ENCODE measurements at regions of chr2 and their contacts with region 1.

Region 1: GRCh38 chr2:186713691-186714090 is 19.8 kb downstream of the FAM171B start:
- DNase-seq: no peak
- ATAC-seq: no peak
- H3K4me3 ChIP-seq: no peak overlapping the region
- H3K27ac ChIP-seq: no peak overlapping the region
- H3K4me1 ChIP-seq: no peaks in the 10 kb centered on the region
- H3K27me3 ChIP-seq: no peaks in the 10 kb centered on the region
- CTCF ChIP-seq: no peak

Region 2: DNA sequence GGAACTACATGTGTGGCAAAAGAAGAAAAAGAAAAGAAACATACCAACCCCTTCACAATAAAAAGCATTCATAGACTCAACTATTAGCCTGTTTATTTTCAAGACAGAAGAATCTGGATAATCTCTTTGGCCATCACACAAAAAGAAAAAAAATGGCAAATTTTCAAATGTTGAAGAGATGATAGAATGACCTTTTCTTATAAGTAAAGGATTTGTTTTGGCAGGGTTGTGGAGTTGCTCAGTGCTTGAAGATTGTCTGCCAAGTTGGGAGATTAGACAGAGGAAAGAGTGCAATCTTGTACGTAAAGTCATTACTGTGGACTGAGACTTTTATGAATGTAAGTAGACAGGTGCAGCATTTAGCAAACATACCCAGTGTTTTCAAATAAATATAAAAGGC is 38.3 kb before region 1 on chr2:
- intact Hi-C with region 1: no loop called
- DNase-seq: no peak
- ATAC-seq: no peak
- H3K4me3 ChIP-seq: no peak overlapping the region
- H3K27ac ChIP-seq: no peak overlapping the region
- H3K4me1 ChIP-seq: no peaks in the 10 kb centered on the region
- H3K27me3 ChIP-seq: no peaks in the 10 kb centered on the region
- CTCF ChIP-seq: no peak

Region 3: DNA sequence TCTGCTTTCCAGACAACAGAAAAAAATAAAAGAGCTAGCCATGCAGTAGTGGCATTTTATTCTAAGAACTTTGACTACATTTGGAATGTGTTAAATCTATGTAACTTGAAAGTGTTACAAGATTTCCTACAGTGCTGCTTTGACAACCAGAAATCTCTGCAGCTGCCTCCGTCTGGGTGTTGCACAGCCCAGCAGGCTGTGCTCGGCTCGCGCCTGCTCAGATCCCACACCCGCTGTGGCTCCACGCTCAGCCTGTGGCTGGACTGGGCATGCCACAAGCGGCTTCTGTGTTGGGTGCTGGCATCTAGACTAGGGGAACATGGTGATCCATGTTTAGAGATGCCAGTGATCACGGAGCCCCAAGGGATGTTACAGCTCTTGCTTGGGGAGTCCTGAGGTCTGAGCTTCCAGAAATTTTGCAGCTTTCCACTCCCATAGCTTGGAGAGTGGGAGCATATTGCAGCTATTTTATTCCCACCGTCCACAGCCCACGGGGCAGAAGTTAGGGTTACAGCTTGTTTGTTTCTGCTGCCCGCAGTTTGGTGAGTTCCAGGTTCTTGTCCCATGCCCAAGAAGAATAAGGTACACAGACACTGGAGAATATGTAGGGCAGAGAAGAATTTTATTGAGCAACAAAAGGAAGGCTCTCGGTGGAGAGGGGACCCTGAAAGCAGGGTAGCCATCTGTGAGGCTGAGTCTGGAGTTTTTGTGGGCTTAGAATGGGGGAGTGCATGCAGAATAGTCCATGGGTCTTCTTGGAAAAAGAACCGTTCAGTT is 24.2 kb after region 1 on chr2:
- intact Hi-C with region 1: loop called in 1 of 10 experiments (anchors 1 kb)
- DNase-seq: no peak
- ATAC-seq: no peak
- H3K4me3 ChIP-seq: no peak overlapping the region
- H3K27ac ChIP-seq: no peak overlapping the region
- H3K4me1 ChIP-seq: no peaks in the 10 kb centered on the region
- H3K27me3 ChIP-seq: no peaks in the 10 kb centered on the region
- CTCF ChIP-seq: no peak